CD4-positive, alpha-beta T cell (primary cell): ENCODE measurements at regions of chr6 and their contacts with region 1.

Region 1: GRCh38 chr6:53359072-53359842 is 10.5 kb upstream of the ELOVL5 start:
- DNase-seq: peak; percentile 76 to 95 (median 87)
- ATAC-seq: peak; percentile 77
- H3K4me3 ChIP-seq: peak overlapping the region; percentile 80
- H3K4me3 Mint-ChIP-seq: peak overlapping the region; percentile 87
- H3K27ac ChIP-seq: peak overlapping the region; percentile 93 to 96
- H3K27ac Mint-ChIP-seq: peak overlapping the region; percentile 93
- H3K4me1 ChIP-seq: peaks cover 43% of the 10 kb centered on the region
- H3K4me1 Mint-ChIP-seq: peaks cover 41% of the 10 kb centered on the region
- H3K27me3 ChIP-seq: no peaks in the 10 kb centered on the region
- H3K27me3 Mint-ChIP-seq: no peaks in the 10 kb centered on the region
- CTCF ChIP-seq: no peak

Region 2: DNA sequence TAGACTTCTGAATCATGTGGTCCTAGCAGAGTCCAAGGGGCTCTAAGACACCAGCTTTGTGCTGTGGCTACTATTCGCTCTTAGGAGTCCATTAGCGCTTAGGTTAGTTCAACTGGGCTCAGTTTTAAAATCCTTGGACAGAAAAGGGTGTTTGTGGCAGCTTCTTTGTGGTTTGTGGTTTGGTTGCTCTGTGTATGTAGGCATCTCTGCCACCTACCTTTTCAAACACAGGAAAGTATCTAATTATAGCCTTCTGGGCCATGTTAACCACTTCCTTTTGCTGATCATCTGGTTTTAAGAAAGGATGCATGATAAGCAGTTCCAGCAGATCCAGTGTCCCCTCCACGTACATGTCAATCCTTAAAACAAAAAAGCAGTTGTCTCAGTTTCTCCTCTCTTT is 375.0 kb before region 1 on chr6:
- CTCF ChIA-PET with region 1: no interaction called
- POLR2A ChIA-PET with region 1: no interaction called
- intact Hi-C with region 1: loop called in 1 of 2 experiments (anchors 10 kb)
- DNase-seq: peak in 8 of 14 experiments; percentile 7 to 91 (median 24)
- ATAC-seq: peak; percentile 90
- H3K4me3 ChIP-seq: peak overlapping the region; percentile 13
- H3K4me3 Mint-ChIP-seq: peak overlapping the region; percentile 73
- H3K27ac ChIP-seq: no peak overlapping the region
- H3K27ac Mint-ChIP-seq: no peak overlapping the region
- H3K4me1 ChIP-seq: peaks cover 37% of the 10 kb centered on the region
- H3K4me1 Mint-ChIP-seq: peaks cover 34% of the 10 kb centered on the region
- H3K27me3 ChIP-seq: peaks cover 8 to 10% of the 10 kb centered on the region in 2 experiments
- H3K27me3 Mint-ChIP-seq: peaks cover 61% of the 10 kb centered on the region
- CTCF ChIP-seq: no peak

Region 3: DNA sequence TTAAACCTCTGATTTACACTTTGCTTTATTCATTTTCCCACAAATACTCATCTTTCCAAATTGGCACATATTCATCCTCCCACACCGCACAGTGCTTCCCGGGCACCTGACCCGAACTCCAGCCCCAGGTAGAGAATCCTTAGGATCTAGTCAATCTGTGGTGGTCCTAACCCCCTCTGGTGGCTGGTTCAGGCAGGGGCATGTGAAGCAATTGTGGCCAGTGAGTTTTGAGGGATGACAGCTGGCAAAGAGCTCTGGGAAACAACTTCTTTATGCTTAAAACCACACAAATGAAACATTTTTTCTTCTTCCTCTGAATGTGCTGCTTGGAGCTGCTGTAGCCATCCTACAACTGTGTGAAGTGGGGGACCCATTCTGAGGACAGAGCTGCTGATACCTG is 65.2 kb before region 1 on chr6:
- CTCF ChIA-PET with region 1: no interaction called
- POLR2A ChIA-PET with region 1: interaction called, 10 read pairs
- intact Hi-C with region 1: loop called in 1 of 2 experiments (anchors 2 kb)
- DNase-seq: peak in 3 of 14 experiments; percentile 22 to 46 (median 40)
- ATAC-seq: no peak
- H3K4me3 ChIP-seq: no peak overlapping the region
- H3K4me3 Mint-ChIP-seq: no peak overlapping the region
- H3K27ac ChIP-seq: peak overlapping the region in 1 of 2 donors; percentile 23
- H3K27ac Mint-ChIP-seq: peak overlapping the region; percentile 73
- H3K4me1 ChIP-seq: peaks cover 53% of the 10 kb centered on the region
- H3K4me1 Mint-ChIP-seq: peaks cover 89% of the 10 kb centered on the region
- H3K27me3 ChIP-seq: no peaks in the 10 kb centered on the region
- H3K27me3 Mint-ChIP-seq: no peaks in the 10 kb centered on the region
- CTCF ChIP-seq: peak; percentile 33

Region 4: GRCh38 chr6:53300656-53301551 is 58.4 kb before region 1 on chr6:
- CTCF ChIA-PET with region 1: interaction called, 4 read pairs
- POLR2A ChIA-PET with region 1: interaction called, 22 read pairs
- intact Hi-C with region 1: loop called in 1 of 2 experiments (anchors 1 kb)
- DNase-seq: peak in 8 of 14 experiments; percentile 12 to 72 (median 36)
- ATAC-seq: peak; percentile 13
- H3K4me3 ChIP-seq: peak overlapping the region; percentile 8
- H3K4me3 Mint-ChIP-seq: peak overlapping the region; percentile 35
- H3K27ac ChIP-seq: peak overlapping the region in 1 of 2 donors; percentile 51
- H3K27ac Mint-ChIP-seq: peak overlapping the region; percentile 83
- H3K4me1 ChIP-seq: peaks cover 54% of the 10 kb centered on the region
- H3K4me1 Mint-ChIP-seq: peaks cover 86% of the 10 kb centered on the region
- H3K27me3 ChIP-seq: no peaks in the 10 kb centered on the region
- H3K27me3 Mint-ChIP-seq: no peaks in the 10 kb centered on the region
- CTCF ChIP-seq: no peak

Region 5: GRCh38 chr6:53504512-53504911 is 145.3 kb after region 1 on chr6:
- CTCF ChIA-PET with region 1: no interaction called
- POLR2A ChIA-PET with region 1: no interaction called
- intact Hi-C with region 1: no loop called
- DNase-seq: no peak
- ATAC-seq: no peak
- H3K4me3 ChIP-seq: no peak overlapping the region
- H3K4me3 Mint-ChIP-seq: no peak overlapping the region
- H3K27ac ChIP-seq: no peak overlapping the region
- H3K27ac Mint-ChIP-seq: no peak overlapping the region
- H3K4me1 ChIP-seq: no peaks in the 10 kb centered on the region
- H3K4me1 Mint-ChIP-seq: no peaks in the 10 kb centered on the region
- H3K27me3 ChIP-seq: no peaks in the 10 kb centered on the region
- H3K27me3 Mint-ChIP-seq: no peaks in the 10 kb centered on the region
- CTCF ChIP-seq: no peak